Activated CD4-positive, alpha-beta T cell treated with anti-CD3 and anti-CD28 coated beads, Interleukin-2, amount 10 ng/mL, durations not matched to agents 7 days and 5 days (primary cell): ENCODE measurements at regions of chr11 and their contacts with region 1.

Region 1: GRCh38 chr11:67468835-67469811 is at the start of gene TMEM134:
- DNase-seq: peak; percentile 89
- H3K4me3 Mint-ChIP-seq: peak within 1 kb of the TSS; percentile 89
- H3K27ac Mint-ChIP-seq: peak within 1 kb of the TSS; percentile 83
- H3K4me1 Mint-ChIP-seq: peaks cover 40% of the 10 kb centered on the region
- H3K27me3 Mint-ChIP-seq: no peaks in the 10 kb centered on the region
- total RNA-seq, gene TMEM134: 42.2 to 47.2 TPM

Region 2: DNA sequence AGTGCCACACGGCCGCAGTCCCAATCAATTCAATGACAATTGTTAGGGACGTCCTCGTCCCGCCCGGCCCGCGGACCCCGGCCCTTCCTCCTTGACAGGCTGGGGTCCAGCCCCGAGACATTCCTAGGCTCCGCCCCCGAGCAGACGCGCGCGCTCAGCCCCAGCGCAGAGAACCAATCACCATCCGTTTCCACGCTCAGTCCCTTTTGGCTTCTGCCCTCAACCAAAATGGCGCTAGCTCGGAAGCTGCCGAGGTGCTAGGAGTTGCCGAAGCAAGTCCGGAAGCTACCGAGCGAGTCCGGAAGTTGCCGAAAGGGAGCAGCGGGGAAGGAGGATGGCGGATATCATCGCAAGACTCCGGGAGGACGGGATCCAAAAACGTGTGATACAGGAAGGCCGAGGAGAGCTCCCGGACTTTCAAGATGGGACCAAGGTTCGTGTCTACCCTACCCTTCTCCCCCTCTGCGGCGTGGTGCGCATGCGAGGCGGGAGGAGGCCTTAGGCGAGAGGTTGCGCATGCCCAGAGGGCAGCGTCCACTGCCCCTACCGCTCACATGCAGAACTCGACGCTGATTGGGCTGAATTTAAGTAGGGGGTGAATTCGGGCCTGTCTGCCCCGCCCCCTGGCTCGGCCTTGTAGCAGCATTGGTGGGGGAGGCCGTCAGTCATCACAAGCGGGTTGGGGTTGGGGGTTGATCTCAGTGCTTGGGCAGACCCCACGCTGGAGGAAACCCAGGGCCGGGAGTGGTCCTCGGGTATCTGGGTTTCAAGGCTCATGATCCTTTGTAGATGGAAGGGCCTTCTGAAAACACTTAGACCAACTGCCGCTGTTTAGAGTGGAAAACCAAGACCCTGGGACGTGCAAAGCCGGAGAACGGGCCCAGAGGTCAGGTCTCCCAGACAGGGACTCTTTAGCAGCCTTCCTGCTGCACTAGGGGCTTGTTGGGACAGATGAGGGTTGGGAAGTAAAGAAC is 14.0 kb after region 1 on chr11 and contains the start of gene AIP:
- CTCF ChIA-PET with region 1: interaction called, 10 read pairs
- POLR2A ChIA-PET with region 1: no interaction called
- DNase-seq: peak; percentile 99
- H3K4me3 Mint-ChIP-seq: peak within 1 kb of the TSS; percentile 86
- H3K27ac Mint-ChIP-seq: peak within 1 kb of the TSS; percentile 99
- H3K4me1 Mint-ChIP-seq: peaks cover 48% of the 10 kb centered on the region
- H3K27me3 Mint-ChIP-seq: no peaks in the 10 kb centered on the region
- total RNA-seq, gene AIP: 149 to 164 TPM

Region 3: DNA sequence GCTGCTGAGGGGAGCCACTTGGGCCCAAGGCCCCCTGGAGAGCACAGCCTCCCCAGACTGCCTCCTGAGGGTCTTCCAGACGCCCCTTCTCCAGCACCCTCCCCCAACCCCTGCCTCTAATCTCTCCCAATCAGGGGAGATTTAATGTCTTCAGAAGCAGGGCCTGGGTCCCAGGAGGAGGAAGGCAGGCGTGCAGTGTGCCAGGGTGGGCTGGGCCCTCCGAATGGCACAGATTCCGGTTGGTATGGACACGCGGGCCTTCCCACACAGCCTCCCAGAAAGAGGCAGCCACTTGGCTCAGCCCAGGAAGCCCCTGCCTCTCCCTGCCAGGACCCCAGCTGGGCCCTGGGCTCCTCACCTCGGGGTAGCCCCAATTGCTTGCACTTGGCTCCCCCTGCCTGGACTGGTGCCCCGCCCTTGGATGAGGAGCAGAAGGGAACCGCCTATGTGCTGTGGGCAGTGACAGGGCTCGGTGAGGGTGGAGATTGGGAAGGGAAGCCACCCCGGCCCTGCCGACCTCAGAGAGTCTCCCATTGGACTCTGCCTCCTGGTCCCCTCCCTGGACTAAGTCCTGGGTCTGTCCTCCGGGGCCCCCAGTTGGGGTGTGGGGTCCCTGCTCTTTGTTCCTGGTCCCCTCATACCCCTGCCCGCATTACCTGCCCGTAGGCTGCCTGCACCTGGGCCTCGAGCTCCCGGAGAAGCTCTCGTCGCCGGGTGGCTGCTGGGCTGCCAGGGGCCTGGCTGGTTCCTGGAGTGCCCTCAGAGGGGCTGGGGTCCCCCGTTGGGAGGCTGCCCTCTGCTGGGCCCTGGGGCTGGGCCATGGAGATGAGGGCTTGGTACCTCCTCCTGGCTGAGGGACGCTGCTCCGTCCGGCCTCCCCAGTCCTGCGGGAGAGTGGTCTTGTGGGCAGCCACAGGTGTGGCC is 54.7 kb after region 1 on chr11:
- CTCF ChIA-PET with region 1: no interaction called
- POLR2A ChIA-PET with region 1: no interaction called
- DNase-seq: no peak
- H3K4me3 Mint-ChIP-seq: no peak overlapping the region
- H3K27ac Mint-ChIP-seq: no peak overlapping the region
- H3K4me1 Mint-ChIP-seq: no peaks in the 10 kb centered on the region
- H3K27me3 Mint-ChIP-seq: peaks cover 8% of the 10 kb centered on the region